ENCODE measurements at regions of chr6 and their contacts with region 1.

Region 1: DNA sequence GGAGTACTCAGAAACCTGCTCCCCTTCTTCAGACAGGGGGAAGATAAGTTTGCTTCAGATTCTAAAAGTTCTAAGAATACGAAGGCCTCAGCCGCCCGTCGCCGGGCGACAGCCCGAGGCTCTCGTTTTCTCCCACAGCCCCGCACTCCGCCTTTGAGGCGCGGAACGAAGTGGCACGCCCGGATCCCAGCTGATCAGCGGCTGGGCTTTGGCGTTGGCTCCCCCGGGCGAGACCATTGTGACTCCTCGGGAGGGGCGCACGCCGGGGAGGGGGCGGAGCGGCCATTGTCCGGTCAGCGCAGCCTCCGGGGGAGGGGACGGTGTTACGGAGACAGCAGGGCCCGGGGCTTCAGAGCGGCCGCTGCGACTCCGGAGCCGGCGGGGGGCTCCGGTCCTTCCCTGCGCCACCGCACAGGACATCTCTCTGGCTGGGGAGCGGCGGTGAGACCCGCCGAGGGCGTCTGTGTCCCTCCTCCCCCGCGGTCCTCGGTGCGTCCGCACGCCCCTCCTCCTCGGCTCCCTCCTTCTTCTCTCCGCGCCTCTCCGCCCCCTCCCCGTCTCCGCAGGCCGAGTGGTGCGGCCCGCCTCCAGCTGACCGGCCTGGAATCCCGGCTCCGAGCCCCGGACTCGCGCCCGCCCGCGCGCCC is at the start of gene ZFAND3:
- DNase-seq: peak; percentile 96
- H3K4me3 Mint-ChIP-seq: peak within 1 kb of the TSS; percentile 92
- H3K27ac Mint-ChIP-seq: peak within 1 kb of the TSS; percentile 93
- H3K4me1 Mint-ChIP-seq: peaks cover 52% of the 10 kb centered on the region
- H3K27me3 Mint-ChIP-seq: no peaks in the 10 kb centered on the region
- total RNA-seq, gene ZFAND3: 35.1 to 36.4 TPM

Region 2: DNA sequence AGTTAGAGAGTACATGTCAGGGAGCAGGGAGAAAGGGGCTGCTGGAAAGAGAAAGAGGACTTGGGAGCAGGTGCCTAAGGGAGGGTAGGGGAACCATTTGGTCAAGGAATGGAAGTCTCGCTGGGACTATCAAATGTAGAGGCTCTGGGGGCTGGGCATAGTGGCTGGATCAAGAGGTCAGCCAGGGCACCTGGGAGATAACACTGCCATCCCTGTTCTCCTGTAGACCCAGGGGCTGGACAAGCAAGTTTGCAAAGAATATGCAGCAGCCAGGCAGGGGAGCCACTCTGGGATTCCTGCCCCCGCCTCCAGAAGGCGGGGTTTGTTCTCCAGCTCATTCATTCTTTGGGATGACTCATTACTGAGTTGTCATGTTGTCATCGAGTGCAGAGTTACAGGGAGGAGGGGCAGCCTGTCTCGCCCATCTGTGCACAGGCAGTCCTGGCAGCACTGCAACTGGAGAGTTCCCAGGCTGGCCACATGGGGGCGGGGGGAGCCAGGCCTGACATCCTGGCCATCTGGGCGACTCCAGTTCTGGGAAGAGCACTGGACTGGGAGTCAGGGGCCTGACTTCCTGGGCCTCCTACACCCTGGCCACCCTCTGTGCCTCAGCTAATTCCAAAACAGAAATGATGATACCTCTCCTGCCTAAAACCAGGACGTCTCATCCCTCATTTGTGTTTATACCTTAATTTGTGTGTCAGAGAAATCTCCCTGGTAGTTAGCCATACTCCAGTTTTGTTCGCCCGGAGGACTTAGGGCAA is 28.0 kb before region 1 on chr6:
- CTCF ChIA-PET with region 1: interaction called, 12 read pairs
- POLR2A ChIA-PET with region 1: no interaction called
- intact Hi-C with region 1: loop called (anchors 1 kb)
- DNase-seq: peak; percentile 94
- H3K4me3 Mint-ChIP-seq: no peak overlapping the region
- H3K27ac Mint-ChIP-seq: no peak overlapping the region
- H3K4me1 Mint-ChIP-seq: peaks cover 12% of the 10 kb centered on the region
- H3K27me3 Mint-ChIP-seq: no peaks in the 10 kb centered on the region

Region 3: DNA sequence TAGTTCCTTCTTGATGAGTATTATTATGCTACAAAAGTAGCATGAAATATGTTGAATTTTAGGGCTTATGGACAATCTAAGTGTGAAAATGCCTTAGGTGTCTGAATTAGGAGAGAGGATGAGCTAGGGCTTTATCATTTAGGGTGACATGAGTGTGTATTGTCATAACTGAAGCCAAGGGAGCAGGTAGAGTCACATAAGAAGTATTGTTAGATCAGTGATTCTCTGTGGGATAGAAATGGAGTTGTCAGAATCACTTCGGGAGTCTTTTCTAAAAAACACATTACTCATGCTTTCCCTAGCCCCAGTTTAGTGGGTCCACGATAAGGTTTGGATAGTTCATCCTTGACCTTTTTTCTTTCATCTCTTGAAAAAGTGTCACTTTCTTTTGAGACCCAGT is 16.6 kb after region 1 on chr6:
- CTCF ChIA-PET with region 1: no interaction called
- POLR2A ChIA-PET with region 1: no interaction called
- intact Hi-C with region 1: loop called (anchors 2 kb)
- DNase-seq: no peak
- H3K4me3 Mint-ChIP-seq: no peak overlapping the region
- H3K27ac Mint-ChIP-seq: peak overlapping the region; percentile 61
- H3K4me1 Mint-ChIP-seq: peaks cover 41% of the 10 kb centered on the region
- H3K27me3 Mint-ChIP-seq: no peaks in the 10 kb centered on the region

Region 4: GRCh38 chr6:37860226-37860839 is 41.0 kb after region 1 on chr6:
- CTCF ChIA-PET with region 1: interaction called, 3 read pairs
- POLR2A ChIA-PET with region 1: interaction called, 9 read pairs
- intact Hi-C with region 1: loop called (anchors 2 kb)
- DNase-seq: no peak
- H3K4me3 Mint-ChIP-seq: no peak overlapping the region
- H3K27ac Mint-ChIP-seq: no peak overlapping the region
- H3K4me1 Mint-ChIP-seq: peaks cover 73% of the 10 kb centered on the region
- H3K27me3 Mint-ChIP-seq: no peaks in the 10 kb centered on the region

Region 5: GRCh38 chr6:37987018-37987417 is 167.7 kb after region 1 on chr6:
- CTCF ChIA-PET with region 1: no interaction called
- POLR2A ChIA-PET with region 1: interaction called, 5 read pairs
- intact Hi-C with region 1: loop called (anchors 2 kb)
- DNase-seq: peak; percentile 49
- H3K4me3 Mint-ChIP-seq: no peak overlapping the region
- H3K27ac Mint-ChIP-seq: peak overlapping the region; percentile 60
- H3K4me1 Mint-ChIP-seq: peaks cover 57% of the 10 kb centered on the region
- H3K27me3 Mint-ChIP-seq: no peaks in the 10 kb centered on the region

Region 6: DNA sequence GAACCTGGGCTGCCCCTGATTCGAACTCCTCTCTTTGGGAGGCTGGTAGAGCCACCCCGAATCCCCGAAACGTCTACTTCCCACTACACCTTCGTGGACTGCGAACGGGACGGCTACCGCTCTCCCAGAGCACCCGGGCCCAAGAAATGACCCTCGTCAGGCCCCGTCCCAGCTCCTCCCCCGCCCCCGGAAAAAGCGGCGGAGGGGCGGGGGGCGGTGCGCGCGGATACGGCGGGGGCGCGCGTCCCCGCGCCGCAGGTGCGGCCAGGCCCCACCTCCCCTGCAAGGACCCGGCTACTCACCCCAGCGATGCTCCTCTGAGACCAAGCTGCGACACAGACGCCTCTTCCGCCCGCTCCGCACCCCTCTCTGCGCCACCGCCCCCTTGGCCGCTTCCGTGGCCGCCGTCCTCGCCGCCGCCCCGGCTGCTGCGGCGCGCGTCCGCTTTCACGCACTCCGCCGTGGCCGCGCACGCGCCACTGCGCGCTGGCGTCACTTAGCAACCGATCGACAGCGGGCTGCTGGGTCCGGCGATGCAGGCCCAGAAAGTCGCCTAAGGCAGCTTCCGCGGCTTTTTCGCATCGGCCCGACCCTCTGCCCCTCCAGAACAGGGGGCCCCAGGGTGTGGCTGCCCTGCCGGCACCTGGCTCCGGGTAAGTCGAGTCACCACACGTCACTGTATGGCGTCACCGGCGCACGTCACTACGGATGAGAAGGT is 820.4 kb after region 1 on chr6 and contains the start of gene BTBD9:
- CTCF ChIA-PET with region 1: no interaction called
- POLR2A ChIA-PET with region 1: no interaction called
- intact Hi-C with region 1: loop called (anchors 2 kb)
- DNase-seq: peak; percentile 87
- H3K4me3 Mint-ChIP-seq: peak within 1 kb of the TSS; percentile 88
- H3K27ac Mint-ChIP-seq: peak within 1 kb of the TSS; percentile 90
- H3K4me1 Mint-ChIP-seq: peaks cover 48% of the 10 kb centered on the region
- H3K27me3 Mint-ChIP-seq: no peaks in the 10 kb centered on the region
- total RNA-seq, gene BTBD9: 14.4 to 14.6 TPM

Measured in activated CD4-positive, alpha-beta memory T cell treated with anti-CD3 and anti-CD28 coated beads for 36 hours (primary cell).